ENCODE measurements at regions of chr5 and their contacts with region 1.

Region 1: GRCh38 chr5:56670118-56670483 is 145.2 kb upstream of the MAP3K1 start:
- DNase-seq: peak; percentile 40
- H3K4me3 Mint-ChIP-seq: no peak overlapping the region
- H3K27ac Mint-ChIP-seq: peak overlapping the region; percentile 69
- H3K4me1 Mint-ChIP-seq: peaks cover 45% of the 10 kb centered on the region
- H3K27me3 Mint-ChIP-seq: peaks cover 10% of the 10 kb centered on the region

Region 2: DNA sequence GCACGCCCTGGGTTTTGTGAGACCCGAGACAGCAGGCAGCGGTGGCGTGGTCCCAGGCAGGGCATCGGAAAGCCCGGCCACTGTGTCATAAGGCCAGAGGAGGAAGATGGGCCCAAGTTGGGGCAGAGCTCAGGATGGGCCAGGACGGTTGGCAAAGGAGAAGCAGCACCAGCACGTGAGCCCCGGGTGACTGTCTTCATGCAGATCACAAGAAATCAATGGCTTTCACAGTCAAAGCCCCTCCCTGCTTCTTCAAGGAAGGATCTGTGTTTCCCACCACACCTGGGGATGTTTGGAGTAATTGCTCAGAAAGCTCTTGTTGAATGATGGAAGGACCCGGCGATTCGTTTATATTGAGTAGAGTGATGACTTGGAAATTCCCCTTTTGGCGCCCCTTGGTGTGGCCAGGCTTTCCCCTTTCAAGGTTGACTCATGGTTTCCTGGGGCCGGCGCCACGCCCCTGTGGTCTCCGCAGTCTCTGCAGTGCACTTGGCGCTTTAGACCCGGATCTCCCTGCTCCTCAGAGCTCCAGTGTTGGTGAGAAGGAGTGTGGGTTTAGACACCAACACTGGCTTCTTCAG is 766.9 kb before region 1 on chr5:
- intact Hi-C with region 1: no loop called
- DNase-seq: peak; percentile 79
- H3K4me3 Mint-ChIP-seq: peak overlapping the region; percentile 55
- H3K27ac Mint-ChIP-seq: peak overlapping the region; percentile 78
- H3K4me1 Mint-ChIP-seq: peaks cover 67% of the 10 kb centered on the region
- H3K27me3 Mint-ChIP-seq: peaks cover 2% of the 10 kb centered on the region

Region 3: GRCh38 chr5:56610093-56610698 is 59.9 kb before region 1 on chr5:
- intact Hi-C with region 1: loop called (anchors 2 kb)
- DNase-seq: peak; percentile 49
- H3K4me3 Mint-ChIP-seq: peak overlapping the region; percentile 48
- H3K27ac Mint-ChIP-seq: peak overlapping the region; percentile 81
- H3K4me1 Mint-ChIP-seq: peaks cover 89% of the 10 kb centered on the region
- H3K27me3 Mint-ChIP-seq: peaks cover 3% of the 10 kb centered on the region

Region 4: GRCh38 chr5:56656816-56657729 is 13.0 kb before region 1 on chr5:
- intact Hi-C with region 1: loop called (anchors 2 kb)
- DNase-seq: no peak
- H3K4me3 Mint-ChIP-seq: no peak overlapping the region
- H3K27ac Mint-ChIP-seq: no peak overlapping the region
- H3K4me1 Mint-ChIP-seq: peaks cover 10% of the 10 kb centered on the region
- H3K27me3 Mint-ChIP-seq: peaks cover 20% of the 10 kb centered on the region

Region 5: DNA sequence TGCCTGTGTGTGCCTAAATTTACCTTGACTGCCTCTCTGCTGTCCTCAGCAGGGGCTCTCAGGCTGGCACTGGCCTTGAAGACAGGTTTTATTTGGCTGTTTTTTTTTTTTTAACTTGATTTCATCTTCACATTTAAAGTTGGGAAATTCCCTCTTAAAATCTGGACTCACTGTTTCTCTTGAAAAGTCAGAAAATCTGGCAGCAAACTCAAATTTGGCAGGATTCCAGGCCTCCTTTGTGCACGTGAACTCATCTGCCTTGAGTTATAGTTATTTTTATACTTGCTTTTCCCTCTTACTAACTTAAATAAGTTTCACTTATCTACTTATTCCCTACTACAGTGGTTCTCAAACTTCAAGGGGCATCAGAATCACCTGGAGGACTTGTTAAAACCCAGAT is 26.8 kb after region 1 on chr5:
- intact Hi-C with region 1: loop called (anchors 1 kb)
- DNase-seq: no peak
- H3K4me3 Mint-ChIP-seq: no peak overlapping the region
- H3K27ac Mint-ChIP-seq: no peak overlapping the region
- H3K4me1 Mint-ChIP-seq: peaks cover 79% of the 10 kb centered on the region
- H3K27me3 Mint-ChIP-seq: peaks cover 3% of the 10 kb centered on the region

Region 6: GRCh38 chr5:56710826-56711590 is 40.9 kb after region 1 on chr5:
- intact Hi-C with region 1: loop called (anchors 1 kb)
- DNase-seq: no peak
- H3K4me3 Mint-ChIP-seq: no peak overlapping the region
- H3K27ac Mint-ChIP-seq: no peak overlapping the region
- H3K4me1 Mint-ChIP-seq: peaks cover 29% of the 10 kb centered on the region
- H3K27me3 Mint-ChIP-seq: peaks cover 9% of the 10 kb centered on the region

Region 7: DNA sequence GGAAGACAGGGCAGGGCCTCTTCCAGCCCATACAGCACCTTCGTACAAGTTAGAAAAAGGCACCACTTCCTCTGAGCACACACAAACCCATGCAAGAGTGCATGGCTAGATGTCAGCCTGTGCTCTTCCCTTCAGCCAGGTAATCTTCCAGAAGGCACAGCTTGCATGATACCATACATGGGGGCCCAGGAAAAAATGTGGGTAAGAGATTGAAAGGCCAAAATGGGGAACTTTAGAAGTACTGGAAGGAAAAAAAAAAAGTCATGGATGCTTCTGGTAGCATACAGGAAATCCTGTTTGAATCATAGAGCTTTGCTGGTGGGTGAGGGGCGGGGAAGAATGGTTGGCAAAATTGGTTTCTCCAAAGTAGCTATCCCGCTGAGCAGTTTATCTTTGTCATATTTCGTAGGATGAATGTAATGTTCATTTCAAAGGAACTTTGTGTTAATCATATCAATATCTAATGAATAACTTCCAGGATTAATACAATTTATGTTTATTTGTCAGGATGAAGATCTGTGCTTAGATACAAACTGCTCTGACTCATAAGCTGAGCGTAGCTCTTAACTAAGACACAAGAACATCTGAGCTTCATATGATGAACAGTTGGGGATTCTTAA is 67.0 kb after region 1 on chr5:
- intact Hi-C with region 1: loop called (anchors 5 kb)
- DNase-seq: no peak
- H3K4me3 Mint-ChIP-seq: no peak overlapping the region
- H3K27ac Mint-ChIP-seq: peak overlapping the region; percentile 72
- H3K4me1 Mint-ChIP-seq: peaks cover 19% of the 10 kb centered on the region
- H3K27me3 Mint-ChIP-seq: peaks cover 2% of the 10 kb centered on the region

Measured in activated T-helper 1 cell treated with anti-CD3 and anti-CD28 coated beads, Interleukin-12 subunit alpha, Interleukin-12 subunit beta, Interleukin-2, Interleukin-4 antibody, amounts not matched to agents 30 ng/mL and 10 ng/mL and 1 ng/mL, durations not matched to agents 14 hours and 24 hours and 36 hours (primary cell).